ENCODE measurements at regions of chr3 and their contacts with region 1.

Region 1: DNA sequence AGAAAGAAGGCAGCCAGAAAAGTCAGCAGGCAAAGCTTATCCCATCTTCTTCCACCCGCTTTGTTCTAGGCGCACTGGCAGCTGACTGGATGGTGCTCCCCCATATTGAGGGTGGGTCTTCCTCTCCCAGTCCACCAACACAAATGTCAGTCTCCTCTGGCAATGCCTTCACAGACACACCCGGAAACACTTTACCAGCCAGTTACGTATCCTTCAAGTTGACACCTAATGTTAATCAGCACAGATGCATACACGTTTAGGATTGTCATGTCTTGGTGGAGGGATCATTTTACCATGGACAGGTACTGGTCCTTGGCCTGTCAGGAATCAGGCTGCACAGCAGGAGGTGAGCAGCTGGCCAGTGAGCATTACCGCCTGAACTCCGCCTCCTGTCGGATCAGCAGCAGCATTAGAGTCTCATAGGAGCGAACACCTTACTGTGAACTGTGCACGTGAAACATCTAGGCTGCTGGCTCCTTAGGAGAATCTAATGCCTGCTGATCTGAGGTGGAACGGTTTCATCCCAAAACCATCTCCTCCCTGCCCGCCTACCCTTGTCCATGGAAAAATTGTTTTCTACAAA is 59.1 kb upstream of the PYDC2 start:
- DNase-seq: peak in 1 of 4 experiments; percentile 46
- ATAC-seq: peak; percentile 90
- H3K4me3 ChIP-seq: no peak overlapping the region
- H3K27ac ChIP-seq: no peak overlapping the region
- H3K4me1 ChIP-seq: no peaks in the 10 kb centered on the region; a peak in 1 of 5 replicates
- H3K27me3 ChIP-seq: no peaks in the 10 kb centered on the region
- CTCF ChIP-seq: peak; percentile 18 to 31 (median 23); a peak in 3 of 6 replicates
- EP300 ChIP-seq: no peak
- POLR2A ChIP-seq: no peak
- RAD21 ChIP-seq: peak in 1 of 2 experiments; percentile 38; a peak in 2 of 4 replicates

Region 2: DNA sequence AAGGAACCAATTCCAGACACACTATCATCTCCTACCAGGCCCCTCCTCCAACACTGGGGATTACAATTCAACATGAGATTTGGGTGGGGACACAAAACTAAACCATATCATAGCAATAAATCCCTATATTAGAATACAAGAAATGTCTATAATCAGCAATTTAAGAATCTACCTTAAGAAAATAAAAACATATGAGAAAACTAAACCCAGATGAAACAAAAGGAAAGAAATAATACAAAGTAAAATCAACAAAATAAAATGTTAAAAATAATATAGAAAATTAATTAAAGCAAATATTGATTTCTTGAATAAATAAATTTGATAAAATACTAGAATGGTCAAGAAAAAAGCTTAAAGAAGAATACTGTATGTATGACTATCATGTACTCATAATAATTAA is 208.9 kb before region 1 on chr3:
- CTCF ChIA-PET with region 1: no interaction called
- POLR2A ChIA-PET with region 1: no interaction called
- in situ Hi-C with region 1: no loop called
- intact Hi-C with region 1: no loop called
- DNase-seq: no peak
- ATAC-seq: no peak
- H3K4me3 ChIP-seq: no peak overlapping the region
- H3K27ac ChIP-seq: no peak overlapping the region
- H3K4me1 ChIP-seq: no peaks in the 10 kb centered on the region
- H3K27me3 ChIP-seq: no peaks in the 10 kb centered on the region
- CTCF ChIP-seq: no peak
- EP300 ChIP-seq: no peak
- POLR2A ChIP-seq: no peak
- RAD21 ChIP-seq: no peak

Region 3: GRCh38 chr3:191244242-191244867 is 157.5 kb before region 1 on chr3:
- CTCF ChIA-PET with region 1: no interaction called
- POLR2A ChIA-PET with region 1: interaction called, 3 read pairs
- in situ Hi-C with region 1: no loop called
- intact Hi-C with region 1: loop called (anchors 5 kb)
- DNase-seq: peak in 2 of 4 experiments; percentile 10 to 13
- ATAC-seq: no peak
- H3K4me3 ChIP-seq: no peak overlapping the region
- H3K27ac ChIP-seq: no peak overlapping the region
- H3K4me1 ChIP-seq: no peaks in the 10 kb centered on the region
- H3K27me3 ChIP-seq: no peaks in the 10 kb centered on the region
- CTCF ChIP-seq: peak in 2 of 3 experiments; percentile 1 to 47; a peak in 2 of 6 replicates
- EP300 ChIP-seq: no peak
- POLR2A ChIP-seq: no peak
- RAD21 ChIP-seq: peak; percentile 25 to 47; a peak in 3 of 4 replicates